WTC11 (cell line): ENCODE measurements at regions of chr3 and their contacts with region 1.

Region 1: GRCh38 chr3:158727206-158728060 is 4.8 kb downstream of the RARRES1 start:
- DNase-seq: peak; percentile 25
- ATAC-seq: peak; percentile 38
- H3K4me3 Mint-ChIP-seq: no peak overlapping the region
- H3K27ac Mint-ChIP-seq: peak overlapping the region; percentile 28; the same call in 1 of the 2 replicates
- H3K4me1 Mint-ChIP-seq: peaks cover 22% of the 10 kb centered on the region
- H3K27me3 Mint-ChIP-seq: peaks cover 12% of the 10 kb centered on the region
- CTCF ChIP-seq: peak; percentile 56

Region 2: GRCh38 chr3:158297940-158298339 is 429.5 kb before region 1 on chr3:
- CTCF ChIA-PET with region 1: no interaction called
- POLR2A ChIA-PET with region 1: no interaction called
- DNase-seq: no peak
- ATAC-seq: no peak
- H3K4me3 Mint-ChIP-seq: no peak overlapping the region
- H3K27ac Mint-ChIP-seq: no peak overlapping the region
- H3K4me1 Mint-ChIP-seq: no peaks in the 10 kb centered on the region
- H3K27me3 Mint-ChIP-seq: no peaks in the 10 kb centered on the region
- CTCF ChIP-seq: no peak

Region 3: DNA sequence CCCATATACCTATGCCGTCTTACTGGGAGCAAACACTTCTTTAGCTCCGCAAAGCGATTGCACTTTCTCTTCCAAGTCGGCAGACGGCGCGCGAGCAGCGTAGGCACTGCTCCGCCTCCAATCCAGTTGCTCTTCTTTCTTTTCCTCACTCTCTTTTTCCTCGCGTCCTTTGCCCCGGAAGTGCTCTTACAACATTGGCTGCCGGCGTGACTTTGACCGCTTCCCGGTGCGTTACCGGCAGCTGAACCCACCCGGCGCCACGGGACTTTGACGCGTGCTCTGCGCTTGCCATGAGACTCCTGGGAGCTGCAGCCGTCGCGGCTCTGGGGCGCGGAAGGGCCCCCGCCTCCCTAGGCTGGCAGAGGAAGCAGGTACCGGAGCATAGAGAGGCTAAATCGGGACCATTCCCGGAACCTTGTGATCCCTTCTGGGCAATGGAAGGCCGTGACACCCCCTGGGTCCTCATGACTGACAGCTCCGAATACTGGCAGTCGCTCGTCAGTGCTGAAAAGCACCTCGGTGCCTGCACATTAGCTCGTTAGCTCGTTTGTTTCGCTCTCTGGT is 83.0 kb before region 1 on chr3 and contains the start of gene GFM1:
- CTCF ChIA-PET with region 1: interaction called, 10 read pairs
- POLR2A ChIA-PET with region 1: no interaction called
- DNase-seq: peak; percentile 86
- ATAC-seq: peak; percentile 99
- H3K4me3 Mint-ChIP-seq: peak within 1 kb of the TSS; percentile 98
- H3K27ac Mint-ChIP-seq: peak within 1 kb of the TSS; percentile 92
- H3K4me1 Mint-ChIP-seq: peaks cover 6% of the 10 kb centered on the region
- H3K27me3 Mint-ChIP-seq: peaks cover 5% of the 10 kb centered on the region; the same call in 1 of the 2 replicates
- CTCF ChIP-seq: peak; percentile 47; the same call in 1 of the 2 replicates
- total RNA-seq, gene GFM1: 38.9 to 44.5 TPM (median 43.2 TPM) in 3 replicates

Region 4: GRCh38 chr3:158672293-158673176 is 54.9 kb before region 1 on chr3 and contains the start of gene LXN:
- CTCF ChIA-PET with region 1: interaction called, 11 read pairs
- POLR2A ChIA-PET with region 1: no interaction called
- DNase-seq: peak; percentile 95
- ATAC-seq: peak; percentile 99
- H3K4me3 Mint-ChIP-seq: peak within 1 kb of the TSS; percentile 87
- H3K27ac Mint-ChIP-seq: peak within 1 kb of the TSS; percentile 94
- H3K4me1 Mint-ChIP-seq: peaks cover 17% of the 10 kb centered on the region
- H3K27me3 Mint-ChIP-seq: no peaks in the 10 kb centered on the region
- CTCF ChIP-seq: peak; percentile 16; the same call in 1 of the 2 replicates
- total RNA-seq, gene LXN: 3.8 to 4.6 TPM (median 4.4 TPM) in 3 replicates

Region 5: GRCh38 chr3:158713094-158713499 is 14.3 kb before region 1 on chr3:
- CTCF ChIA-PET with region 1: interaction called, 20 read pairs
- POLR2A ChIA-PET with region 1: no interaction called
- DNase-seq: no peak
- ATAC-seq: peak; percentile 68
- H3K4me3 Mint-ChIP-seq: no peak overlapping the region
- H3K27ac Mint-ChIP-seq: peak overlapping the region; percentile 64
- H3K4me1 Mint-ChIP-seq: peaks cover 22% of the 10 kb centered on the region
- H3K27me3 Mint-ChIP-seq: no peaks in the 10 kb centered on the region
- CTCF ChIP-seq: no peak

Region 6: GRCh38 chr3:158761350-158761749 is 33.9 kb after region 1 on chr3:
- CTCF ChIA-PET with region 1: interaction called, 15 read pairs
- POLR2A ChIA-PET with region 1: no interaction called
- DNase-seq: no peak
- ATAC-seq: no peak
- H3K4me3 Mint-ChIP-seq: no peak overlapping the region
- H3K27ac Mint-ChIP-seq: no peak overlapping the region
- H3K4me1 Mint-ChIP-seq: peaks cover 8% of the 10 kb centered on the region
- H3K27me3 Mint-ChIP-seq: no peaks in the 10 kb centered on the region
- CTCF ChIP-seq: no peak

Region 7: GRCh38 chr3:158790901-158791589 is 63.6 kb after region 1 on chr3:
- CTCF ChIA-PET with region 1: interaction called, 46 read pairs
- POLR2A ChIA-PET with region 1: no interaction called
- DNase-seq: no peak
- ATAC-seq: peak; percentile 65
- H3K4me3 Mint-ChIP-seq: no peak overlapping the region
- H3K27ac Mint-ChIP-seq: no peak overlapping the region
- H3K4me1 Mint-ChIP-seq: no peaks in the 10 kb centered on the region; the same call in 1 of the 2 replicates
- H3K27me3 Mint-ChIP-seq: peaks cover 2% of the 10 kb centered on the region
- CTCF ChIP-seq: peak; percentile 11

Region 8: DNA sequence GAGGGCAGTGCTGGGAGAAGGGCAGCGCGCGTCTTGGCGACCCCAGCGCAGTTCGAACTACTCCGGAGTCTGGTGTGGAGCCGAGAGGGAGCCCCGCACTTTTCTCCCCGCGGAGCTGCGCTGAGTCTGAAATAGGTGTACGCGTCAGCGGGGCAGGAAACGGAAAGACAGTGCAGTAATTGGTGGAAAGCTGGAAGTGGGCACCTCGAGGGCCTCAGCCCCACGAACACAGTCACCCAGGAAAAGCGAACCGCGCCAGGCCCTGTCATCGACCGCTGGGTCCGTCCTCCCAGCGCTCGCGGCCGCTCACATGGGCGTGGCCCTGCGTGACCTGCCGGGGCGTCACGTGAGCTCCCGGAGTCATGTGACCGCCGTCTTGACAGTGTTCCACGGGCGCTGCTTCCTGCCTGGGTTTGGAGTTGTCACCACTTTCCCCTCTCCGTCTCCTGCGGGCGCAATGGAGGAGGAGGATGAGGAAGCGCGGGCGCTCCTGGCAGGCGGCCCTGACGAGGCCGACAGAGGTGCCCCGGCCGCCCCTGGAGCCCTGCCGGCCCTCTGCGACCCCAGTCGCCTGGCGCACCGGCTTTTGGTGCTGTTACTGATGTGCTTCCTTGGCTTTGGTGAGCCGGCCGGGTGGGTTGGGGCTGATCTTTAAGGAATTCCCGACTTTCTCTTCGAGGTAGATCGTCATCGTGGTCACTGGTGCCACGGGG is 74.4 kb after region 1 on chr3 and contains the start of gene MFSD1:
- CTCF ChIA-PET with region 1: interaction called, 16 read pairs
- POLR2A ChIA-PET with region 1: interaction called, 3 read pairs
- DNase-seq: peak; percentile 86
- ATAC-seq: peak; percentile 88
- H3K4me3 Mint-ChIP-seq: peak within 1 kb of the TSS; percentile 90
- H3K27ac Mint-ChIP-seq: no peak within 1 kb of the TSS
- H3K4me1 Mint-ChIP-seq: peaks cover 8% of the 10 kb centered on the region
- H3K27me3 Mint-ChIP-seq: peaks cover 38% of the 10 kb centered on the region
- CTCF ChIP-seq: no peak
- total RNA-seq, gene MFSD1: 6.6 to 8.2 TPM (median 6.7 TPM) in 3 replicates

Region 9: GRCh38 chr3:158970006-158970405 is 242.6 kb after region 1 on chr3:
- CTCF ChIA-PET with region 1: no interaction called
- POLR2A ChIA-PET with region 1: no interaction called
- DNase-seq: no peak
- ATAC-seq: no peak
- H3K4me3 Mint-ChIP-seq: no peak overlapping the region
- H3K27ac Mint-ChIP-seq: no peak overlapping the region
- H3K4me1 Mint-ChIP-seq: peaks cover 14% of the 10 kb centered on the region
- H3K27me3 Mint-ChIP-seq: no peaks in the 10 kb centered on the region
- CTCF ChIP-seq: no peak

Region 10: GRCh38 chr3:159185443-159186050 is 458.1 kb after region 1 on chr3:
- CTCF ChIA-PET with region 1: no interaction called
- POLR2A ChIA-PET with region 1: no interaction called
- DNase-seq: no peak
- ATAC-seq: no peak
- H3K4me3 Mint-ChIP-seq: no peak overlapping the region
- H3K27ac Mint-ChIP-seq: no peak overlapping the region
- H3K4me1 Mint-ChIP-seq: no peaks in the 10 kb centered on the region
- H3K27me3 Mint-ChIP-seq: no peaks in the 10 kb centered on the region
- CTCF ChIP-seq: no peak